Dorsolateral prefrontal cortex (tissue), 120 donors: ENCODE measurements at regions of chr7 and their contacts with region 1.

Region 1: GRCh38 chr7:87933945-87934698 is at the start of gene ADAM22:
- DNase-seq: peak; percentile 88 to 97 (median 96)
- H3K4me3 ChIP-seq: peak within 1 kb of the TSS; percentile 56 to 96 (median 86)
- H3K27ac ChIP-seq: peak within 1 kb of the TSS; percentile 59 to 96 (median 90)
- H3K27me3 ChIP-seq: no peaks in the 10 kb centered on the region
- CTCF ChIP-seq: peak in 53 of 56 donors; percentile 5 to 71 (median 48)
- total RNA-seq, gene ADAM22: 44.2 to 138 (median 99.9) TPM

Region 2: GRCh38 chr7:87876040-87876868 is 57.9 kb before region 1 on chr7 and contains the starts of genes DBF4 and SLC25A40:
- intact Hi-C with region 1: loop called (anchors 1 to 2 kb)
- DNase-seq: peak; percentile 80 to 95 (median 92)
- H3K4me3 ChIP-seq: peak within 1 kb of the TSS; percentile 60 to 97 (median 89)
- H3K27ac ChIP-seq: peak within 1 kb of the TSS; percentile 53 to 96 (median 88)
- H3K27me3 ChIP-seq: no peaks in the 10 kb centered on the region
- CTCF ChIP-seq: peak in 21 of 56 donors; percentile 0 to 46 (median 20)
- total RNA-seq, gene DBF4: 3.2 to 13.8 (median 7.3) TPM
- total RNA-seq, gene SLC25A40: 20.6 to 71.2 (median 45.1) TPM

Region 3: GRCh38 chr7:88101769-88102168 is 167.6 kb after region 1 on chr7:
- intact Hi-C with region 1: loop called in 1 of 2 experiments (anchors 5 kb)
- DNase-seq: no peak
- H3K4me3 ChIP-seq: no peak overlapping the region
- H3K27ac ChIP-seq: no peak overlapping the region
- H3K27me3 ChIP-seq: no peaks in the 10 kb centered on the region
- CTCF ChIP-seq: no peak

Region 4: GRCh38 chr7:88169717-88170320 is 235.7 kb after region 1 on chr7:
- intact Hi-C with region 1: loop called in 1 of 2 experiments (anchors 5 kb)
- DNase-seq: no peak
- H3K4me3 ChIP-seq: no peak overlapping the region
- H3K27ac ChIP-seq: peak overlapping the region in 4 of 59 donors; percentile 4 to 36 (median 12)
- H3K27me3 ChIP-seq: no peaks in the 10 kb centered on the region
- CTCF ChIP-seq: peak; percentile 56 to 89 (median 76)

Region 5: DNA sequence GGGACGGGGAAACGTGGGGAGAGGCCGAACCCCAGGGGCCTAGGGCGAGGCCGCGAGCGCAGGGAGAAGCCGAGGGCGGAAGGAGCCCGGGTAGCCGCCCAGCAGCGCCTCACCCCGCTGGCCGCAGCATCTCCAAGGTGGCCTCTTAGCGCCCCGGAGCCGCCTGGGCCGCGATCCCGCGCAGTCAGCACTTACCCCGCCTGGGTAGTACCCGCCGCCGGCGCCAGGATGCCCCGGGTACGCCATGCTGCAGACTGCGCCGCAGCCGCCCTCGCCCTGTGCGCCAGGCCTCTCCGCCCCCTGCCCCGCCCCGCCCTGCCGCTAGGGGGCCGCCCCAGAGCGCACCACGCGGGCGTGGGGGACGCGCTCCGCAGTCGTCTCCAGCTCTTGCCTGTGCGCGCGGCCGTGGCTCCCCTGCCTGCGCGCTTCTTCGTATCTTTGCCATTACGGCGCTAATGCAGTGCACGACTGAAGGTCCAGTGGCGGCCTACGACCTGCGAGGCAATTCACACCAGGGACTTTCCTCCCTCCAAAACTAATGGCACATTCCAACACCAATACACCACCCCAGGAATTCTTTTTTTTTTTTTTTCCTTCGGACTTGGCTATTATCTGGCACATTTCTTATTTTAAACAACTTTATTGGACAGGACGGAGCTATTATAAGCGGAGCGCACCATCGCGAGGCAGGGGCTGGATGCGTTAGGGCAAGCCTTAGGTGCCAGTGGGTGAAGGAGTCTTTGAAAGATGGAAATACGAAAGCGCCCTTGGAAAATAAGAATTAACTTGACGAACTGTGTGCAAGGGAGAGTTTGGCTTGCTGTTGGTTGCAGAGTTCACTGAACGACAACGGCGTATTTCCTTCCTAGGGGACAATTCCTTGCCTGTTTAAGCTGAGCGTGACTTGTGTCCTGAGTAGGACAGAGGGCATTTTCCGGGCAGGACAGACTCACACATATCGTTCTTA is 285.9 kb after region 1 on chr7 and contains the start of gene SRI:
- intact Hi-C with region 1: loop called in 1 of 2 experiments (anchors 10 kb)
- DNase-seq: peak; percentile 69 to 91 (median 83)
- H3K4me3 ChIP-seq: peak within 1 kb of the TSS; percentile 75 to 100 (median 96)
- H3K27ac ChIP-seq: peak within 1 kb of the TSS; percentile 61 to 97 (median 92)
- H3K27me3 ChIP-seq: no peaks in the 10 kb centered on the region
- CTCF ChIP-seq: peak; percentile 43 to 91 (median 78)
- total RNA-seq, gene SRI: 143 to 361 (median 208) TPM